PC-9 (cell line): ENCODE measurements at regions of chr2 and their contacts with region 1.

Region 1: GRCh38 chr2:230498506-230499107 is 82.6 kb downstream of the SP100 start:
- DNase-seq: no peak
- H3K4me3 ChIP-seq: no peak overlapping the region
- H3K27ac ChIP-seq: no peak overlapping the region
- H3K4me1 ChIP-seq: no peaks in the 10 kb centered on the region
- H3K27me3 ChIP-seq: no peaks in the 10 kb centered on the region
- CTCF ChIP-seq: no peak

Region 2: GRCh38 chr2:229815858-229816257 is 682.7 kb before region 1 on chr2:
- CTCF ChIA-PET with region 1: no interaction called
- POLR2A ChIA-PET with region 1: no interaction called
- intact Hi-C with region 1: no loop called
- DNase-seq: peak in 1 of 2 experiments; percentile 65
- H3K4me3 ChIP-seq: no peak overlapping the region
- H3K27ac ChIP-seq: peak overlapping the region; percentile 46
- H3K4me1 ChIP-seq: peaks cover 6% of the 10 kb centered on the region
- H3K27me3 ChIP-seq: no peaks in the 10 kb centered on the region
- CTCF ChIP-seq: no peak

Region 3: DNA sequence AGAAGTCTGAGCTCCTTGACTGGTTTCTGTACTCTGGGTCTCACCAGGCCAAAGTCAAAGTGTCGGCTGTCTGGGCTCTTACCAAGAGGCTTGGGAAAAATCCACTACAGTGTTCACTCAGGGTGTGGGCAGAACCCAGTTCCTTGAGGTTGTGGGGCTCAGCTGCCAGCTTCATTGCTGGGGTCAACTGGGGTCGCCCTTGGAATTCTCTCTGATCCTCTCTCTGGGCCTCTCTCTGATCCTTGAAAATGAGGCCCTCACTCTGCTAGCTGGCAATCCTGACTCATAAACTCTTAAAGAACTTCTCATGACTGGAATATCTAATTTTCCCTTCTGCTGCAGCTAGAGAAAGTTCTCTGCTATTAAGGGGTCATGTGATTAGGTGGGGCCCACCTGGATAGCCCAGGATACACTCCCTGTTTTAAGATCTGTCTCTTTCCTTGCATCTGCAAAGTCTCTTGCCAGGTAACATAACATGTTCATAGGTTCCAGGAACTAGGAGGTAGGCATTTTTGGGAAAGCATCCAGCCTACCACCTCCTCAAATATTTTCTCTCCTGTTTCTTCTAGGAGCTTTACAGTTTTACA is 345.1 kb before region 1 on chr2:
- CTCF ChIA-PET with region 1: no interaction called
- POLR2A ChIA-PET with region 1: no interaction called
- intact Hi-C with region 1: no loop called
- DNase-seq: no peak
- H3K4me3 ChIP-seq: no peak overlapping the region
- H3K27ac ChIP-seq: no peak overlapping the region
- H3K4me1 ChIP-seq: no peaks in the 10 kb centered on the region
- H3K27me3 ChIP-seq: no peaks in the 10 kb centered on the region
- CTCF ChIP-seq: no peak

Region 4: DNA sequence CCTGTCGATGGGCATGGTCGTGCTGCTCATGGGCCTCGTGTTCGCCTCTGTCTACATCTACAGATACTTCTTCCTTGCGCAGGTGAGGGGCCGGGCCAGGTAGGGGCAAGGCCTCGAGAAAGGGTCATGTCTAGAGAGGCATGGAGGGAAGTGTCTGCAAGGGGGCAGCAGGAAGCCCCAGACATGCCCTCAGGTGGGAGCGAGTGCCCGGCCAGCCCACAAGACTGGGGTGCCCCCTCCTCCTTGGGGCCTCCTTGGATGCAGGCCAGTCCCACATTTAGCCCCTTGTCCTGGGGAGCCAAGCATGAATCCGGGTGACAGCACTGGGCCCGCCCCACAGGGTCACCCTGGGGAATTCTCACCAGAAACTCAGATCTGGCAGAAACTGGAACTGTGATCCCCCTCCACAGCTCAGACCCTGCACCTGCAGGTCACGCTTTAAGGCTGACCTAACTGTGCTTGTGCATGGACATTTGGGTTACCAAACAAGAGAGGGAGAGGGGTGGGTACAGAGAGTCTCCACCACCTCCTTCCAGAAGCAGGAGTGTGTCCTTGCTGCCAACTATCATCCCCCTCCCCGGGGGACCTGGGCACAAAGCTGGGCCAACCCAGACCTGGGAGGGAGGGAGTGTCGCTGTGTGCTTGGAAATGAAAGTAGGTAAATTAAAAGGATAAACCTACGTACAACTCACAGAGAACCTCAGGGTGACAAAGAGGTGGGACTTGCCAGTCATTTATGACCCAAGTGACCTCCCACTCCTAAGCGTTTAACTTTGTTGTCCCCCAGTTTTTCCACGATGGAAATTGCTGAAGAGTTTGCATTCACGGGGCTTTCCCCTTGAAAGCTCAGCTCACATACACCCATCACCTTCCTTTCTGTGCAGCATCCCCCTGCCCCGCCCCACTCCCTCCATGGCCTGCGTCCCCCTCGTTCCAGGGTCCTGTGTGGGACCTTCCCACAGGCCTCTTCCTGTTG is 375.2 kb after region 1 on chr2:
- CTCF ChIA-PET with region 1: no interaction called
- POLR2A ChIA-PET with region 1: interaction called, 11 read pairs
- intact Hi-C with region 1: no loop called
- DNase-seq: no peak
- H3K4me3 ChIP-seq: no peak overlapping the region
- H3K27ac ChIP-seq: no peak overlapping the region
- H3K4me1 ChIP-seq: no peaks in the 10 kb centered on the region
- H3K27me3 ChIP-seq: no peaks in the 10 kb centered on the region
- CTCF ChIP-seq: no peak